Activated CD4-positive, alpha-beta T cell treated with anti-CD3 and anti-CD28 coated beads for 36 hours (primary cell): ENCODE measurements at regions of chr1 and their contacts with region 1.

Region 1: GRCh38 chr1:235075188-235075926 is 53.3 kb downstream of the TOMM20 start:
- DNase-seq: peak; percentile 86
- ATAC-seq: peak; percentile 64
- H3K4me3 Mint-ChIP-seq: peak overlapping the region; percentile 41
- H3K27ac Mint-ChIP-seq: peak overlapping the region; percentile 98
- H3K4me1 Mint-ChIP-seq: peaks cover 28% of the 10 kb centered on the region
- H3K27me3 Mint-ChIP-seq: no peaks in the 10 kb centered on the region

Region 2: GRCh38 chr1:234722904-234723720 is 352.2 kb before region 1 on chr1:
- CTCF ChIA-PET with region 1: no interaction called
- POLR2A ChIA-PET with region 1: interaction called, 3 read pairs
- intact Hi-C with region 1: loop called (anchors 1 to 2 kb)
- DNase-seq: peak; percentile 92
- ATAC-seq: peak; percentile 68
- H3K4me3 Mint-ChIP-seq: peak overlapping the region; percentile 64
- H3K27ac Mint-ChIP-seq: peak overlapping the region; percentile 97
- H3K4me1 Mint-ChIP-seq: peaks cover 66% of the 10 kb centered on the region
- H3K27me3 Mint-ChIP-seq: no peaks in the 10 kb centered on the region

Region 3: DNA sequence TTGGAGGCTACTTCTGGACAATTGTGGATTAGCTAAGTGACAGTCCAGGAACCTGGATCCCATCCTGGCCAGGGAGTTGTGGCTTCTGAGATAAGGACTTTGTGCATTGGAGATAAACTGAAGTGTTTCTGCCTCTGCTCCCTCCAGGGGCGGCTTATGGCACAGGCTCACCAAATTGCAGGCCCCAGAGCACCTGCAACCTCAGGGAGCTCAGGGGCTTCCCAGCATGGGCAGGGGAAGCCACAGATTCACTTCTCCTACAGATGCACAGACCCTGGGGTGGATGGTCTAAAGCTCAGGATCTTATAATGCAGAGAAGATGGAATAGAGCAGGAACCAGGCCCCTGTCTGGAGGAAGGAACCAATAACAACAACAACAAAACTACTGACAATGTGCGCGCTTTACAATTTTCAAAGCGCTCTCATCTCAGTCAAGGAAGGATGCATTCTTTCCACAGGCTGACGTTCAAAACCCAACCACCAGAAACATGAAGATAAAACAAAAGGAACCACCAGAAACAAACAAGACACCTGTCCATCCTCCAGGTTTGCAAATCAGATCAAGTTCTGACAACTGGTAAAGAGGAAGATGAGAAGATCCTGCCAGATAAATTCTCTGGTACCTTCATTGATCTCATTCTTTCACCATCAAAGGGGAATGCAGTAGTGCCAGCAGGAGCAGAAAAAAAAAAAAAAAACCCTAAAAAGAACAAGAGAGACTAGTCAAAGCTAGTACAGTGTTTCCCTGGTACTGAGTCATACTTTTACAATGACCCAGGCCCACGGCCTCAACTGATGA is 344.4 kb before region 1 on chr1:
- CTCF ChIA-PET with region 1: no interaction called
- POLR2A ChIA-PET with region 1: interaction called, 3 read pairs
- intact Hi-C with region 1: loop called in 1 of 2 experiments (anchors 2 kb)
- DNase-seq: peak; percentile 77
- ATAC-seq: peak; percentile 87
- H3K4me3 Mint-ChIP-seq: peak overlapping the region; percentile 32
- H3K27ac Mint-ChIP-seq: peak overlapping the region; percentile 92
- H3K4me1 Mint-ChIP-seq: peaks cover 71% of the 10 kb centered on the region
- H3K27me3 Mint-ChIP-seq: no peaks in the 10 kb centered on the region

Region 4: GRCh38 chr1:234944439-234945344 is 130.7 kb before region 1 on chr1:
- CTCF ChIA-PET with region 1: no interaction called
- POLR2A ChIA-PET with region 1: no interaction called
- intact Hi-C with region 1: no loop called
- DNase-seq: peak; percentile 6
- ATAC-seq: peak; percentile 45
- H3K4me3 Mint-ChIP-seq: no peak overlapping the region
- H3K27ac Mint-ChIP-seq: peak overlapping the region; percentile 70
- H3K4me1 Mint-ChIP-seq: peaks cover 12% of the 10 kb centered on the region
- H3K27me3 Mint-ChIP-seq: no peaks in the 10 kb centered on the region

Region 5: DNA sequence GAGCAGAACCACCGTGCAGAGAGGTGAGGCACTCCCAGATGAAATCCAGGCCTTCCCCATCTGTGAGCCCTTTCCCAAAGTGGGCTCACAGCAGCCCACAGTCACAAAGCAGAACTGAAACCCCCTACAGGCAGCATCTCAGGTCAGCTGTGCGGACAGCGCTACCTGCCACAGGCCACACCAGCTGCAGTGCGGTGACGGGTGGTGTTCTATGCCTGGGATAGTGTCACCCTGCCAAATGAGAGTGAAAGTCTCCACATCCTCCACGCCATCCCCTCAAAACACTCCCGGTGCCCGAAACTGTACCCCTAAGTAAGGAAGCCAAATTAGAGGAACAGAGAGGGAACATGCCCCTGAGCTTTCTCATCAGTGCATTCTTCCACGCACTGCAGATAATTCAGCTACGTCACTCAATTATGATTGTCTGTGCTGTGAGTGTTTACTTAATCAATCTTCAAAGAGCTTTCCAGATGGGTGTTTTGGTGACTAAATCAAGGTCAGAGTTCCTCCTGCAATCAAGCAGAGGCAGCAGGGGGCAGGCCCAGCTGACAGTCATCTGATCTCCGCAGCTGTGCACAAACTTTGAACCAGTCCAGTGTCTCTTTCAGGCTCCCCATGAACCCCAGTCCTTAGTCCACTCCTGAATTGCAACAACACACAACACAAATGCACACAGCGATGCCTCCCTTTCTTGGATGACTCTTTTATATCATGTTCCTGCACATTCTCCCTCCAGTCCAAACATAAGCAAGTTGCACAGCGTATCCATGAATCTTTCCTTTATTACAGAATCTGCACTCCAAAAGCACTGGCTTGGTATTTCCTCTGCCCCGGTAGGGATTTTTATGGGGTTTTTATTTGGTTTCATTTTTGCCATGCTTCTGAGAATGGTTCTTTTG is 96.7 kb before region 1 on chr1:
- CTCF ChIA-PET with region 1: interaction called, 3 read pairs
- POLR2A ChIA-PET with region 1: interaction called, 3 read pairs
- intact Hi-C with region 1: loop called (anchors 2 kb)
- DNase-seq: peak; percentile 80
- ATAC-seq: peak; percentile 62
- H3K4me3 Mint-ChIP-seq: peak overlapping the region; percentile 75
- H3K27ac Mint-ChIP-seq: peak overlapping the region; percentile 98
- H3K4me1 Mint-ChIP-seq: peaks cover 66% of the 10 kb centered on the region
- H3K27me3 Mint-ChIP-seq: no peaks in the 10 kb centered on the region

Region 6: GRCh38 chr1:235050911-235051360 is 24.4 kb before region 1 on chr1:
- CTCF ChIA-PET with region 1: interaction called, 3 read pairs
- POLR2A ChIA-PET with region 1: interaction called, 3 read pairs
- intact Hi-C with region 1: loop called (anchors 1 to 2 kb)
- DNase-seq: peak; percentile 62
- ATAC-seq: peak; percentile 70
- H3K4me3 Mint-ChIP-seq: no peak overlapping the region
- H3K27ac Mint-ChIP-seq: peak overlapping the region; percentile 37
- H3K4me1 Mint-ChIP-seq: peaks cover 51% of the 10 kb centered on the region
- H3K27me3 Mint-ChIP-seq: no peaks in the 10 kb centered on the region

Region 7: DNA sequence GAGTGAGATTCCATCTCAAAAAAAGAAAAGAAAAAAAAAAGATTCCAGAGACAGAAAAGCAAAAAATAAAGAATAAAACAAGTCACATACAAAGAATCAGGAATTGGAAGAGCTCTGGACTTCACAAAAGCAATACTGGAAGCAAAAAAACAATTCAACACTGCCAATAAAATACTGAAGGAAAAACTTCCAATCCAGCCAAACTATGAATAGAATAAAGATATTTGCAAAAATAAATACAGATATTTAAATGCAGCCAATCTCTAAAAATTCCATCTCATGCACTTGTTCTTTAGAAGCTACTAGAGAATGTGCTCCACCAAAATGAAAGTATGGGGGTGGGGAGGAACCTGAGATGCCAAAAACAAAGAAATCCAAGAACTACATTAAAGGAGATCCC is 115.1 kb after region 1 on chr1:
- CTCF ChIA-PET with region 1: no interaction called
- POLR2A ChIA-PET with region 1: no interaction called
- intact Hi-C with region 1: no loop called
- DNase-seq: no peak
- ATAC-seq: no peak
- H3K4me3 Mint-ChIP-seq: no peak overlapping the region
- H3K27ac Mint-ChIP-seq: no peak overlapping the region
- H3K4me1 Mint-ChIP-seq: peaks cover 11% of the 10 kb centered on the region
- H3K27me3 Mint-ChIP-seq: no peaks in the 10 kb centered on the region

Region 8: GRCh38 chr1:236741753-236742152 is 1666.4 kb after region 1 on chr1:
- CTCF ChIA-PET with region 1: no interaction called
- POLR2A ChIA-PET with region 1: no interaction called
- intact Hi-C with region 1: no loop called
- DNase-seq: no peak
- ATAC-seq: no peak
- H3K4me3 Mint-ChIP-seq: no peak overlapping the region
- H3K27ac Mint-ChIP-seq: no peak overlapping the region
- H3K4me1 Mint-ChIP-seq: no peaks in the 10 kb centered on the region
- H3K27me3 Mint-ChIP-seq: peaks cover 6% of the 10 kb centered on the region